BJ (cell line): ENCODE measurements at regions of chr14 and their contacts with region 1.

Region 1: DNA sequence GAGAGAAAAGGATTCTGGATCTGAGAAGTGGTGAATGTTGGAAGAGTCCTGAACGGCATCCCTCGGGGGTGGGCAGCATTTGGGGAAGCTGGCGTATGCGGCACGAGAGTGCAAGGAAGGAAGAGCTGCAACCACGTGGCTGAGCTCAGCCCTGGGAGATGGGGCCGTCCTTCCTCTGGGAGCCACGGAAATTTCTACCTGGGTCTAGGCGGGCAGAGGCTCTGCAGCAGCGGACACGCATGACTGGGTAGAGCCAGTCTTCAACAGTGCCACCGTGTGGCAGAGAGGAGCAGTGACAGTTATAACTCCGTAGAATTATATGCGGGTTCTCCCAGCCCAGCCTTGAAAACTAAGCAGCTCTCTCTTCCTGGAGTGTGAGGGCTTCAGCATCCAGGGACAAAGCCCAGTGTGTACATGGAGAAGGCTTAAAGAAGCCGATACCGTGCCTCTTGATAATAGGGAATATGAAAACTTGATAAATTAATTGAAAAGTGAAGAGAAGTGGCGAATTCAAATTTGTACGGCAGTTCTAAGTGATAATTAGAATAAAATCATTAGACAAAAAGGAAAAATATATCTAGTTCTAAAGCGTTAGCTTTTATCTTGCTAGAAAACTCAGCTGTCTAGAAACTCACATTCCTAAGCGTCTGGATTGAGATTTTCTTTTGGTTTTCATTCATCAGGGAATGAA is 82.9 kb upstream of the STXBP6 start:
- DNase-seq: no peak
- H3K4me3 ChIP-seq: no peak overlapping the region
- H3K27me3 ChIP-seq: peaks cover 6% of the 10 kb centered on the region
- CTCF ChIP-seq: peak; percentile 85

Region 2: DNA sequence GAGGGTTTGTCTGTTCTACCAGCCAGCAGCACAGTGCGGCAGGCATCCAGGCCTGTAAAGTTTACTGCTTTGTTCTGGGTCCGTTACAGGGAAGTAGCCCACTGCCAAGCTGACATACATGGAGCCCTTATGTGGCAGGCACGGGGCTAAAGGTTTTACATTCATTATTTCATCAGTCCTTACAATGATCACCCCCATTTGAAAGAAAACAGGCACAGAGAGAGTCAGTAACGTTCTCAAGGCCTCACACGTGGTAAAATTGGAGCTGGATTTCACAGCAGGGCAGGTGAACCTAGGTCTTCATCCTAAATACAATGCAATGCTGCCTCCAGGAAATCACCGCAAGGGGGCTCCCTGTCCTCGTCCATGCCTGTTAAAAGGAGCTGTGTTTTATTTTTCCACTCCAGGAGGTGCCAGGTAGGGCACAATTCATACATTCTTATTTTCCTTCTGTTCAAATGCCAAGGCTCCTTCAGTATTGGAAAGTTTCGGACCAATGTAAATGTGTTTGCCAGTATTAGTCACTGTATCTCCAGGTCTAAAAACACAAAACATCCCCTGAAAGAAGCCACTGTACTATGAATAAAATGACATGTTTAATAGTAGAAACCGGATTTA is 326.7 kb before region 1 on chr14:
- CTCF ChIA-PET with region 1: interaction called, 80 read pairs
- POLR2A ChIA-PET with region 1: no interaction called
- DNase-seq: no peak
- H3K4me3 ChIP-seq: no peak overlapping the region
- H3K27me3 ChIP-seq: no peaks in the 10 kb centered on the region
- CTCF ChIP-seq: peak; percentile 83

Region 3: GRCh38 chr14:24817212-24818057 is 315.4 kb before region 1 on chr14:
- CTCF ChIA-PET with region 1: interaction called, 24 read pairs
- POLR2A ChIA-PET with region 1: no interaction called
- DNase-seq: no peak
- H3K4me3 ChIP-seq: no peak overlapping the region
- H3K27me3 ChIP-seq: no peaks in the 10 kb centered on the region
- CTCF ChIP-seq: peak; percentile 72

Region 4: DNA sequence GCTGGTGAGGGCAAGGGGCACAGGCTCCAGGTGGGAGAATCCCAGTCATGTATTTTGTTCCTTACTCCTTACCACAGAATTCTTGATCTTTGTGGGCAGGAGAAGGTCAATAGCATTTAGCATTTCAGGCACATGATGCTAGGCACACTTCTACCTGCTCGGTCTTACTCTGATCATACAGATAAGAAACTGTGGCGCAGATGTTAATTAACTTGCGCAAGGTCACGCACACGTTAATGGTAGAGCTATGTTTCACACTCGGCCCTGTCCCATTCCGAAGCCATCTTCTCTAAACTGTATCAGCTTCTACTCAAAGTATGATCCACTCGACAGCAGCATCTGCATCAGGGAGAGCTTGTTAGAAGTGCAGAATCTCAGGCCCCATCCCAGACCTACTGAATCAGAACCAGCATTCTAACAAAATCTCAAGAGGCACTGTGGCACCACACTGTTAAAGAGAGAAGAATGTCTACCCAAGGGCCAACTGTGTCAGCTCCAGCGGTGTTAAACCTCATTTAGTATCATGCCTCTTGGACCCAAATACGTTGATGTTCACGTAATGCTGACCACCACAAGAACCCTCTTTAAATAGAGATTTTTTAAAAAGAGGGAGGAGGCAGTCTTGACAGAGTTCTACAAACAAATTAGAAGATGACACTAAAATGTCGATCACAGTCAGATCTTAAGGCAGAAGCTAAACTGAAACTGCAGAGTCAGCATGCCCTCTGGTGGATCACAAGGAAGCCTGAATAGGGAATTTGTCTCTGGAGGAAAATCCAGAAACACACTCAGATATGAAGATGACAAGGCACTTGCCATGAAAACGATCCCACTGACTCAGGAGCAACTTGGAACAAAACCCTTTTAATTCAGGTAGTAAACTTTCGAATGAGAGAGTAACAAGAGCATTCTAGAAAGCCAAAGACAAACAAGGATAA is 90.2 kb before region 1 on chr14:
- CTCF ChIA-PET with region 1: interaction called, 11 read pairs
- POLR2A ChIA-PET with region 1: no interaction called
- DNase-seq: no peak
- H3K4me3 ChIP-seq: no peak overlapping the region
- H3K27me3 ChIP-seq: no peaks in the 10 kb centered on the region
- CTCF ChIP-seq: peak; percentile 63

Region 5: GRCh38 chr14:25049568-25050268 is 83.2 kb before region 1 on chr14 and contains the start of gene STXBP6:
- CTCF ChIA-PET with region 1: interaction called, 11 read pairs
- POLR2A ChIA-PET with region 1: no interaction called
- DNase-seq: no peak
- H3K4me3 ChIP-seq: peak within 1 kb of the TSS; percentile 66
- H3K27me3 ChIP-seq: no peaks in the 10 kb centered on the region
- CTCF ChIP-seq: no peak
- polyA plus RNA-seq, gene STXBP6: 12.1 and 16.8 TPM in 2 replicates

Region 6: GRCh38 chr14:25121337-25122122 is 11.3 kb before region 1 on chr14:
- CTCF ChIA-PET with region 1: interaction called, 14 read pairs
- POLR2A ChIA-PET with region 1: no interaction called
- DNase-seq: peak; percentile 66
- H3K4me3 ChIP-seq: no peak overlapping the region
- H3K27me3 ChIP-seq: no peaks in the 10 kb centered on the region
- CTCF ChIP-seq: no peak

Region 7: DNA sequence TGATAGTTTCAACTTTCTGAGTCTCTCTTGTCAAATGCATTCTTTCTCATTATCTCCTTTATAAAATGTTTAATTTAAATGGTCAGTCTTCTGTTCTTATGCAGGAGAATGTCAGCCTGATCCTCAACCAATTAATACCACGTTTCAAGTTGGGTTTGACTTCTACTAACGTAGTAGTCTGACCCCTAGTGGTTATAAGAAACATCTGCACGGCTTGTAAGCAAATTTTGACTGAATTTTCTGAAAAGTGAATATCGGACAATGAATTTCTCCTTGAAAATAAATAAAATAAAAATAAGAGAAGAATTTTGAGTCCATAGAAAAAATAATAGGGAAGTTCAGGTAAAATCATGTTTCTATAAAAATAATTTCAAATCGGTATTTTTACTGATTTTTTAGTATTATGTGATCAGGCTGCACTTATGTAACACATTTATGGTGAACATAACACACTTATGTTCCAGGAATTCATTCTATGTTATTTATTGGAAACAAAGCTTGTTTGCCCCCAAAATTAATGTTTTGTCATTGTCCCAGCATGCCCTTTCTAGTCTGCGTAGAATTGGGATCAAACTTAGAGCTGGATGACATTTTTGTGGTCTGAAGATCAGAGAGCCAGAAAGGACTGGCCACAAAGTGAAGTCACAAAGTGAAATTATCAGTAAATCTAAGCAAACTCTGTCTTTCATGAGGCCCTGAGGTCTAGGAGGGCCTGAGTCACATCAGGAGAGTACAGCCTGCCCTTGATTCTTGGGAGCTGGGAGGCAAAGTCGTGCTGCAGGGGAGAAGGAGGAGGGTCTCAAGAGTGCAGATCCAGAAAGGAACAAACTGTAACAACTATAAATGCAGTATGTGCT is 18.3 kb after region 1 on chr14:
- CTCF ChIA-PET with region 1: interaction called, 6 read pairs
- POLR2A ChIA-PET with region 1: interaction called, 32 read pairs
- DNase-seq: no peak
- H3K4me3 ChIP-seq: no peak overlapping the region
- H3K27me3 ChIP-seq: no peaks in the 10 kb centered on the region
- CTCF ChIP-seq: peak; percentile 72

Region 8: DNA sequence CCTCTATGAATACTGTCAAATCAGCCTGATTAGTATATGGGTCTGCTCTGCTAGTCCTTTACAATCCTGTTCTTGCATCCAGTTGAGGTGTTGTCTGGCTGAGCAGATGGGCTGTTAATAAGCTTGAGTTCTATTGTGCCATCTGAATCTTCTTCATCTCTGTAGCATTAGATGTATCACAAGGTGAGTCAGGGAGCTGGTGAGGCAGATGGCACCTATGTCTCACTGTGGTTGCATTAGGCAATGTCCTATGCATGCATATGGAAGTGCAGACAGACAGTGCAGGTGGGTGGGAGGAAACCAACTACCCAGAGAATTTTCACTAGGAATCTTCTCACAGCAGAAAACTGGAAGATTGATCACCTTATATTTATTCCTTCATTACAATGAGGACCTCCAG is 82.7 kb after region 1 on chr14:
- CTCF ChIA-PET with region 1: no interaction called
- POLR2A ChIA-PET with region 1: no interaction called
- DNase-seq: no peak
- H3K4me3 ChIP-seq: no peak overlapping the region
- H3K27me3 ChIP-seq: no peaks in the 10 kb centered on the region
- CTCF ChIP-seq: no peak